Activated CD8-positive, alpha-beta T cell treated with anti-CD3 and anti-CD28 coated beads for 36 hours (primary cell): ENCODE measurements at regions of chr1 and their contacts with region 1.

Region 1: DNA sequence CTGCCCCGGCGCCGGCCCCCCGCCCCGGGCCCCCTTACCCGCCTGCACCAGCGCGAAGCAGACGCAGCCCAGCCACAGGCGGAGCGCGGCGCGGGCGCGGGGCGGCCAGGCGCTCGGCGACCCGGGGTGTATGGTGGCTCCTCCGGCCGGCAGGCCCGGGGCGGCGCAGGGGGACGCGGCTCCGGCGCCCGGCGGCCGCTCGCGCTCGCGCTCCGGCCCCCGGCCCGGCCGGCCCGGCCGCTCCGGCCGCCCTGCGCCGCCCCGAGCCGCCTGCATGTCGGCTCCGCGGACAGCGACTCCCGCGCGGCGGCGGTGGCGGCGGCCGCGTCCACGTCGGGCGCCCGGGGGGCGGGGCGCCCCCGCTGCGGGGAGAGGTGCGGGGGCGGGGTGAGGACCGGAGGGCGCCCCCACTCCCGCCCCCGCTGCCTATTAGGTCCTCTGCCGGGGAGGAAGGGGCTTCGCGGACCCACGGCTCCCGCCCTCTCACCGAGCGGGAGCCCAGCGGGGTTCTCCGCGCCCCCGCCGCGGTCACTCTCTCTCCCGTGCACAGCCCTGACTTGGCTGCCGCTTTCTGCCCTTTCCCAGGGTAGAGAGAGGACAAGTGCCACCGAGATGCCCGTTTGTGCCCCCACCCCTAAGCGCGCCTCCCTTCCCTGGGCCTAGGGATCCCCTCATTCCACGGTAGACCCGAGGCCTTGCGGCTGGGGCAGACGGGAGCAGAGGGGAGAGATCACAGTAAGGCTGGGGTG is at the start of gene FNDC5:
- DNase-seq: no peak
- ATAC-seq: peak; percentile 4
- H3K4me3 Mint-ChIP-seq: peak within 1 kb of the TSS; percentile 28
- H3K27ac Mint-ChIP-seq: no peak within 1 kb of the TSS
- H3K4me1 Mint-ChIP-seq: peaks cover 8% of the 10 kb centered on the region
- H3K27me3 Mint-ChIP-seq: peaks cover 41% of the 10 kb centered on the region
- CTCF ChIP-seq: no peak
- total RNA-seq, gene FNDC5: not detected

Region 2: DNA sequence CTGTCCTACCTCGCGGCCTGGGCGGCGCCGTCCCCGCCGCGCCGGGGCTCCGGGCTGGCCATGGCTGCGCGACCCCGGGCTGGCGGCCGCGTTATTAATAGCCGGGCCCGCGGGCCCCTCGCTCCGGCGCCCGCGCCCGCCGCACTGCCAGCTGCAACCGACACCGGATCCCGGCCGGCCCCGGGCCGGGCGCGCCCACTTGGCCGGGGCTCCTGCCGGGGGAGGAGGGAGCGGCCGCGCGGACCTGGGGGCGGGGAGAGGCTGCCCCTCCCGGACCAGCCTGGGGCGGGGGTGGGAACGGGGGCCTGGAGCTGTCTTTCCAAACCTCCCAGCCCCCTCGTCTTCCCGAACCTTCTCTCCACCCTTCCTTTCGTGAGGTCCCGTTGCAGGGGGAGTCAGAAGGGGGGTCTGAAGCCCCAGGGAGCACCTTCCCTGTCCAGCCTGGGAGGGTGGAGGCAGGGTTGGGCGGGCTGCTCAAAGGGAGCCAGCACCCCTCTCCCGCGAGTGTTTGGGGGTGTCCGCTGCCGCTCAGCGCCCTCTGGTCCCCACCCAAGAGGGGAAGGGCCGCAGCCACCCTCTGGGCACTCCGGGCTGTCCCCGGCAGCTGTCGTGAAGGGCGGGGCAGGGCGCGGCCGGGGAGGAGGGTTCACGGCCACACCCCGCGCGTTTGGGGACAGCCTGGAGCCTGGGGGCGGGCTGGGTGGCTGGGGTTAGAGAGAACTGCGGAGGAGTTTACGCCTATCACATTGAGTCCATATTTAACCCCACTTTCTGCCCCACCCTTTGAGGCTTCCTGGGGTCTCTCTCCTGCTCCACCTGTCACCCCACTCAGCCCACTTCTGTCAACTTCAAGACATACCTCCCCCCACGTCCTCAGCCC is 167.9 kb before region 1 on chr1 and contains the start of gene SYNC:
- CTCF ChIA-PET with region 1: interaction called, 14 read pairs
- POLR2A ChIA-PET with region 1: interaction called, 3 read pairs
- intact Hi-C with region 1: no loop called
- DNase-seq: peak; percentile 33
- ATAC-seq: peak; percentile 68
- H3K4me3 Mint-ChIP-seq: peak within 1 kb of the TSS; percentile 1
- H3K27ac Mint-ChIP-seq: no peak within 1 kb of the TSS
- H3K4me1 Mint-ChIP-seq: peaks cover 5% of the 10 kb centered on the region
- H3K27me3 Mint-ChIP-seq: peaks cover 30% of the 10 kb centered on the region
- CTCF ChIP-seq: no peak
- total RNA-seq, gene SYNC: not detected

Region 3: GRCh38 chr1:32858791-32859190 is 12.0 kb before region 1 on chr1:
- CTCF ChIA-PET with region 1: interaction called, 13 read pairs
- POLR2A ChIA-PET with region 1: no interaction called
- intact Hi-C with region 1: no loop called
- DNase-seq: no peak
- ATAC-seq: no peak
- H3K4me3 Mint-ChIP-seq: no peak overlapping the region
- H3K27ac Mint-ChIP-seq: no peak overlapping the region
- H3K4me1 Mint-ChIP-seq: no peaks in the 10 kb centered on the region
- H3K27me3 Mint-ChIP-seq: no peaks in the 10 kb centered on the region
- CTCF ChIP-seq: no peak

Region 4: GRCh38 chr1:32886004-32886827 is 15.4 kb after region 1 on chr1 and contains the start of gene HPCA:
- CTCF ChIA-PET with region 1: interaction called, 31 read pairs
- POLR2A ChIA-PET with region 1: interaction called, 3 read pairs
- intact Hi-C with region 1: no loop called
- DNase-seq: peak; percentile 63
- ATAC-seq: peak; percentile 94
- H3K4me3 Mint-ChIP-seq: no peak within 1 kb of the TSS
- H3K27ac Mint-ChIP-seq: no peak within 1 kb of the TSS
- H3K4me1 Mint-ChIP-seq: no peaks in the 10 kb centered on the region
- H3K27me3 Mint-ChIP-seq: peaks cover 50% of the 10 kb centered on the region
- CTCF ChIP-seq: peak; percentile 49
- total RNA-seq, gene HPCA: 0.49 to 0.61 TPM